ENCODE measurements at regions of chr11 and their contacts with region 1.

Region 1: DNA sequence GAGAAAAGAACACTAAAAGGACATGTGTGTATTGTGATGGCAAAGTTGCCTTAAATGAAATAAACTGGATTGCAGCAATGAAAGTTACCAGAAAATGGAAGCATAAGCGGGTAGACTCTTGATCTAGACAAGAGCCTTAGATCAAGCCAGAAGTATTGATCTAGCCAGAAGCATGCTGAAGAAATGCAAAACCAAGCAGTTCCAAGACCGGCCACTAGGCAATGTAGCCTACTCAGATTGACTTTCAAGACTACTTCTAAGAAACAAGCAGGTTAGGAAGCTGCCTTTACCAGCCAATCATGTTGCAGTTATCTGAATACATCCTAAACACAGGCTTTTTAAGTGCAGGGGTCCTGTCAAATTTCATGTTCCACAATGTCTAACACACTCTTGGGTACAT is 54.6 kb downstream of the KCNA4 start:
- DNase-seq: peak; percentile 13 to 74
- H3K4me3 ChIP-seq: no peak overlapping the region
- H3K27ac ChIP-seq: no peak overlapping the region
- H3K4me1 ChIP-seq: peaks cover 2 to 13% (median 6%) of the 10 kb centered on the region in 4 experiments; a peak in 6 of 7 replicates
- H3K27me3 ChIP-seq: no peaks in the 10 kb centered on the region
- CTCF ChIP-seq: peak in 2 of 3 experiments; percentile 48 to 78; a peak in 3 of 4 replicates
- EP300 ChIP-seq: no peak
- POLR2A ChIP-seq: no peak
- RAD21 ChIP-seq: peak; percentile 39 to 50

Region 2: GRCh38 chr11:29914203-29914930 is 47.9 kb before region 1 on chr11:
- CTCF ChIA-PET with region 1: no interaction called
- POLR2A ChIA-PET with region 1: no interaction called
- DNase-seq: no peak
- H3K4me3 ChIP-seq: no peak overlapping the region
- H3K27ac ChIP-seq: no peak overlapping the region
- H3K4me1 ChIP-seq: no peaks in the 10 kb centered on the region
- H3K27me3 ChIP-seq: peaks cover 0 to 2% (median 0%) of the 10 kb centered on the region in 4 experiments; a peak in 1 of 7 replicates
- CTCF ChIP-seq: no peak
- EP300 ChIP-seq: no peak
- POLR2A ChIP-seq: no peak
- RAD21 ChIP-seq: no peak

Region 3: DNA sequence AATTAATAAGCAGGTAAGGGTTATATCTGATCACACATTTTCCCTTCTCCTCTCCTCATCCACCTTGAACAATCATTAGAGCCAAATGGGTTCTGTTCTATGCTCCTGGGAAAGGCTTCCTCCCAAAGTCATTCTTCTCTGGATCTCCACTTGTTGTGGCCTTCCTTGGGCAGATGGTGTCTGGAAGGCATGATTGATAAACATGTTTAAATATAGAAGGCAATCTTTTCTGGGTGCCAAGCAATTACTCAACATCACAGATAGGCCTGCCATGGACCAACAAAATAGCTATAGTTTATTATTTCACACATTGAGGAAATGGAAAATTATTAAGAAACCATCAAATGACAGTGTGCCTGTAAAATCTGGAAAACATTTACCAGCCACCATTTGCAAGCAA is 18.9 kb before region 1 on chr11:
- CTCF ChIA-PET with region 1: interaction called, 12 read pairs
- POLR2A ChIA-PET with region 1: no interaction called
- DNase-seq: no peak
- H3K4me3 ChIP-seq: no peak overlapping the region
- H3K27ac ChIP-seq: no peak overlapping the region
- H3K4me1 ChIP-seq: no peaks in the 10 kb centered on the region
- H3K27me3 ChIP-seq: no peaks in the 10 kb centered on the region
- CTCF ChIP-seq: no peak
- EP300 ChIP-seq: no peak
- POLR2A ChIP-seq: no peak
- RAD21 ChIP-seq: no peak

Region 4: DNA sequence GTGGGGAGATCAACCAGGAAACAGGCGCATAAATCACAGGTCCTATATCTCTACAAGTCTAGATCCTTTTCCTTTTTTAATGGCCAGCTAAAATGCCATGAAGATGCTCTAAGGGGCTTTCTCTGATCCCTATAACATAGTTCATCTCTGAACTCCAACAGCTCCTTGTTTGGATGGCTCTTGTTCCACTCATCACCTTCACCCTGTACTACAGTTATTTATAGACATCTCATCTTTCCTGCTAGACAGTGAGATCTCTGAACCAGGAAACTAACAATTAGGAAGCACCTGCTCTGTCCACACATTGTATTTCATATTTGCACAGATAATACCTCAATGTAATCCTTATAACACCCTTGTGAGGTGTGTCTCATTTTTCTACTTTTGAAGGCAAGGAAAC is 23.0 kb after region 1 on chr11:
- CTCF ChIA-PET with region 1: interaction called, 16 read pairs
- POLR2A ChIA-PET with region 1: no interaction called
- DNase-seq: no peak
- H3K4me3 ChIP-seq: no peak overlapping the region
- H3K27ac ChIP-seq: no peak overlapping the region
- H3K4me1 ChIP-seq: no peaks in the 10 kb centered on the region
- H3K27me3 ChIP-seq: no peaks in the 10 kb centered on the region; a peak in 1 of 7 replicates
- CTCF ChIP-seq: no peak
- EP300 ChIP-seq: no peak
- POLR2A ChIP-seq: no peak
- RAD21 ChIP-seq: no peak

Region 5: GRCh38 chr11:30172883-30173311 is 210.7 kb after region 1 on chr11:
- CTCF ChIA-PET with region 1: no interaction called
- POLR2A ChIA-PET with region 1: no interaction called
- DNase-seq: no peak
- H3K4me3 ChIP-seq: no peak overlapping the region
- H3K27ac ChIP-seq: no peak overlapping the region
- H3K4me1 ChIP-seq: no peaks in the 10 kb centered on the region
- H3K27me3 ChIP-seq: no peaks in the 10 kb centered on the region
- CTCF ChIP-seq: no peak
- EP300 ChIP-seq: no peak
- POLR2A ChIP-seq: no peak
- RAD21 ChIP-seq: no peak

Region 6: DNA sequence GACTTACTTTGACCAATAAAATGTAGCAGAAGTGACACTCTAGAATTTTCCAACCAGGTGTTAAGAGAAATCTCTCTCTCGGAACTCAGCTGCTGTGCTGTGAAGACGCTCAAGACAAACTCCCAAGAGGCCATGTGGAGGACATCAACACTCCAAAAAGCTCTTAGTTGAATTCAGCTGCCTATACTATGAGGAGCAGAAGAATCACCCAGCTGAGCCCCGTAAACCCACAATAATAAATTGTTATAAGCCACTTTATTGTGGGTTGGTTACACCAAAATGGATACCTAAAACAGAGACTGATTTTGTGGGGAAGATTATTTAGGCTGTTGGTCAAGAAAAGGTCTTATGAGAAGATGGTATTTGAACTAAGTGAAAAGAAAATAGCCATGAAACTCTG is 224.5 kb after region 1 on chr11:
- CTCF ChIA-PET with region 1: no interaction called
- POLR2A ChIA-PET with region 1: no interaction called
- DNase-seq: no peak
- H3K4me3 ChIP-seq: no peak overlapping the region
- H3K27ac ChIP-seq: no peak overlapping the region
- H3K4me1 ChIP-seq: no peaks in the 10 kb centered on the region
- H3K27me3 ChIP-seq: no peaks in the 10 kb centered on the region
- CTCF ChIP-seq: no peak
- EP300 ChIP-seq: no peak
- POLR2A ChIP-seq: no peak
- RAD21 ChIP-seq: no peak

Measured in H1 (cell line).